Caco-2 (cell line): ENCODE measurements at regions of chr2 and their contacts with region 1.

Region 1: GRCh38 chr2:57701391-57701815 is 345.2 kb upstream of the VRK2 start:
- DNase-seq: peak in 1 of 2 experiments; percentile 25
- H3K4me3 ChIP-seq: no peak overlapping the region
- H3K4me3 Mint-ChIP-seq: no peak overlapping the region
- H3K27ac Mint-ChIP-seq: peak overlapping the region; percentile 77
- H3K4me1 ChIP-seq: peaks cover 5% of the 10 kb centered on the region; the same call in 1 of the 2 replicates
- H3K4me1 Mint-ChIP-seq: peaks cover 16% of the 10 kb centered on the region
- H3K27me3 ChIP-seq: no peaks in the 10 kb centered on the region
- H3K27me3 Mint-ChIP-seq: no peaks in the 10 kb centered on the region
- CTCF ChIP-seq: no peak

Region 2: DNA sequence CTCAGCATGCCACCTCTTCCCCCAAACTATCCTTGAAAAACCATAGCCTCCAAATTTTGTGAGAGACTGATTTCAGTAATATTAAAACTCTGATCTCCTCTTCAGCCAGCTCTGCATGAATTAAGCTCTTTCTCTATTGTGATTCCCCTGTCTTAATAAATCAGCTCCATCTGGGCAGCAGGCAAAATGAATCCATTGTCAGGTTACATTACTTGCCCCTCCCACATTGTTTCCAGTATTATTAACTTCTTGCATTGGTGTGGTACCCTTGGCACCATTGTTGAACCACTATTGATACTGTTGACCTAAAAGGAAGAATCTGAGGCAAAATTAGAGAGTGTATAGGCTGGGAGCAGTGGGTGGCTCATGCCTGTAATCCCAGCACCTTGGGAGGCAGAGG is 167.0 kb before region 1 on chr2:
- CTCF ChIA-PET with region 1: no interaction called
- POLR2A ChIA-PET with region 1: no interaction called
- intact Hi-C with region 1: loop called (anchors 1 kb)
- DNase-seq: no peak
- H3K4me3 ChIP-seq: no peak overlapping the region
- H3K4me3 Mint-ChIP-seq: no peak overlapping the region
- H3K27ac Mint-ChIP-seq: no peak overlapping the region
- H3K4me1 ChIP-seq: no peaks in the 10 kb centered on the region
- H3K4me1 Mint-ChIP-seq: no peaks in the 10 kb centered on the region
- H3K27me3 ChIP-seq: no peaks in the 10 kb centered on the region
- H3K27me3 Mint-ChIP-seq: peaks cover 7% of the 10 kb centered on the region
- CTCF ChIP-seq: no peak

Region 3: GRCh38 chr2:57549642-57550102 is 151.7 kb before region 1 on chr2:
- CTCF ChIA-PET with region 1: interaction called, 8 read pairs
- POLR2A ChIA-PET with region 1: no interaction called
- intact Hi-C with region 1: loop called (anchors 1 kb)
- DNase-seq: peak in 1 of 2 experiments; percentile 6
- H3K4me3 ChIP-seq: no peak overlapping the region
- H3K4me3 Mint-ChIP-seq: no peak overlapping the region
- H3K27ac Mint-ChIP-seq: no peak overlapping the region
- H3K4me1 ChIP-seq: no peaks in the 10 kb centered on the region
- H3K4me1 Mint-ChIP-seq: no peaks in the 10 kb centered on the region
- H3K27me3 ChIP-seq: no peaks in the 10 kb centered on the region
- H3K27me3 Mint-ChIP-seq: peaks cover 19% of the 10 kb centered on the region
- CTCF ChIP-seq: peak; percentile 33 to 44

Region 4: GRCh38 chr2:58081000-58081399 is 379.6 kb after region 1 on chr2:
- CTCF ChIA-PET with region 1: no interaction called
- POLR2A ChIA-PET with region 1: no interaction called
- intact Hi-C with region 1: no loop called
- DNase-seq: peak in 1 of 2 experiments; percentile 25
- H3K4me3 ChIP-seq: no peak overlapping the region
- H3K4me3 Mint-ChIP-seq: no peak overlapping the region
- H3K27ac Mint-ChIP-seq: no peak overlapping the region
- H3K4me1 ChIP-seq: no peaks in the 10 kb centered on the region
- H3K4me1 Mint-ChIP-seq: peaks cover 7% of the 10 kb centered on the region
- H3K27me3 ChIP-seq: no peaks in the 10 kb centered on the region
- H3K27me3 Mint-ChIP-seq: no peaks in the 10 kb centered on the region
- CTCF ChIP-seq: no peak